A549 (cell line): ENCODE measurements at regions of chr3 and their contacts with region 1.

Region 1: GRCh38 chr3:126389112-126389793 is 5.5 kb upstream of the CFAP100 start:
- DNase-seq: peak; percentile 50 to 81
- ATAC-seq: peak; percentile 98 to 99
- H3K4me3 ChIP-seq: peak overlapping the region; percentile 36
- H3K27ac ChIP-seq: peak overlapping the region; percentile 70 to 84; a peak in 5 of 6 replicates
- H3K4me1 ChIP-seq: no peaks in the 10 kb centered on the region
- CTCF ChIP-seq: peak; percentile 96
- EP300 ChIP-seq: no peak
- POLR2A ChIP-seq: no peak
- RAD21 ChIP-seq: peak; percentile 69 to 91

Region 2: GRCh38 chr3:126245811-126246727 is 143.2 kb before region 1 on chr3:
- CTCF ChIA-PET with region 1: interaction called, 10 read pairs
- POLR2A ChIA-PET with region 1: no interaction called
- DNase-seq: peak; percentile 33 to 54
- ATAC-seq: peak; percentile 89 to 95
- H3K4me3 ChIP-seq: no peak overlapping the region
- H3K27ac ChIP-seq: no peak overlapping the region
- H3K4me1 ChIP-seq: no peaks in the 10 kb centered on the region
- CTCF ChIP-seq: peak; percentile 67
- EP300 ChIP-seq: no peak
- POLR2A ChIP-seq: no peak
- RAD21 ChIP-seq: peak; percentile 58 to 62

Region 3: DNA sequence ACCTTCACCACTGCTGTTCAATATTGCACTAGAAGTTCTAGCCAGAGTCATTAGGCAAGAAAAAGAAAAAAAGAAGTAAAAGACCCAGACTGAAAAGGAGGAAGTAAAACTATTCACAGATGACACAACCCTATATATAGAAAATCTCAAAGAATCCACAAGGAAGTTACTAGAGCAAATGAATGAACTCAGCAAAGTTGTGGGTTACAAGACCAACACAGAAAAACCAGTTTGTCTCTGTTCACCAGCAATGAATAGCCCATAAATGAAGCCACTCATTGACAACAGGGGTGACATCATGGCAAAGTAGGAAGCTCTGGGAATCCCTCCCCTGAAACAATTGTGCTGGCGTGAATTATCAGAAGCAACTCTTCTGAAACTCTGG is 10.1 kb after region 1 on chr3:
- CTCF ChIA-PET with region 1: interaction called, 16 read pairs
- POLR2A ChIA-PET with region 1: no interaction called
- DNase-seq: no peak
- ATAC-seq: no peak
- H3K4me3 ChIP-seq: no peak overlapping the region
- H3K27ac ChIP-seq: no peak overlapping the region
- H3K4me1 ChIP-seq: no peaks in the 10 kb centered on the region
- CTCF ChIP-seq: no peak
- EP300 ChIP-seq: no peak
- POLR2A ChIP-seq: no peak
- RAD21 ChIP-seq: no peak